Breast epithelium (tissue), 4 donors: ENCODE measurements at regions of chr7 and their contacts with region 1.

Region 1: DNA sequence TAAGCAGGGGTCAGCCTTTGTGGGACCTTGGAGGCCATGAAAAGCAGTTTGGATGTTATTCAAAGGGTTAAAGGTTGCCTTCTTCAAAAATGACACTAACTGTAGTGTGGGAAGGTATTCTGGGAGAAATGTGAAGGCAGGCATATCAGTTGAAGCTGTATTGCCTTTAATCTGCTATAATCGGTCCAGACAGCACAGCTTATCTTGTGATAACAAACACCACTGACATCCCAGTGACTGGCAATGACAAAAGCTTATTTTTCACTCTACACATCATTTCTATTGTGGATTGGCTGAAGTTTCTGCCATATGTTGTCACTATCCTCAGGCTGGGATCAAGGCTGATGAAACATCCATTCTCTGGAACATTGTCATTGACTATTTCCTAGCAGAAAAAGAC is 1149.2 kb downstream of the GRM8 start:
- DNase-seq: no peak
- H3K4me3 ChIP-seq: no peak overlapping the region
- H3K27ac ChIP-seq: no peak overlapping the region
- H3K4me1 ChIP-seq: no peaks in the 10 kb centered on the region
- H3K27me3 ChIP-seq: no peaks in the 10 kb centered on the region
- CTCF ChIP-seq: no peak
- POLR2A ChIP-seq: no peak

Region 2: DNA sequence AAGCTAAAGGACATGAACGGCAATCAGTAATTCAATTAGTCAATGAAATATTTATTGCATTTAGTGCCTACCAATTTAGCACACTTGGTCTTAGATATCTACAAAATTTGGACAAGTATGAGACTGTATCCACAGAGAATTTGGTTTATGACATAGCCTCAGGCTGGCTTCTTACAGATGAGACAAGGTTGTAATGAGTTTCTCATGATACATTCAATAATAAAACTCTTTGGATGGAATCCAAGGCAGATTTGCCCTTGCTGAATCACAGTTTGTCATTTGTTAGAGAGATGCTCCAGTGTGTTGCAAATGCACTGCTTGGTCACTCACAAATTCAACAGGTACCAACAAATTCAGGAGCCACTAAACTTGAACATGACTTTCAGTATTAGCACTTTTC is 1500.5 kb before region 1 on chr7:
- intact Hi-C with region 1: loop called (anchors 10 kb)
- DNase-seq: no peak
- H3K4me3 ChIP-seq: no peak overlapping the region
- H3K27ac ChIP-seq: no peak overlapping the region
- H3K4me1 ChIP-seq: no peaks in the 10 kb centered on the region
- H3K27me3 ChIP-seq: no peaks in the 10 kb centered on the region
- CTCF ChIP-seq: no peak
- POLR2A ChIP-seq: no peak

Region 3: GRCh38 chr7:125573126-125573525 is 530.5 kb before region 1 on chr7:
- intact Hi-C with region 1: no loop called
- DNase-seq: no peak
- H3K4me3 ChIP-seq: no peak overlapping the region
- H3K27ac ChIP-seq: no peak overlapping the region
- H3K4me1 ChIP-seq: no peaks in the 10 kb centered on the region
- H3K27me3 ChIP-seq: no peaks in the 10 kb centered on the region
- CTCF ChIP-seq: no peak
- POLR2A ChIP-seq: no peak

Region 4: DNA sequence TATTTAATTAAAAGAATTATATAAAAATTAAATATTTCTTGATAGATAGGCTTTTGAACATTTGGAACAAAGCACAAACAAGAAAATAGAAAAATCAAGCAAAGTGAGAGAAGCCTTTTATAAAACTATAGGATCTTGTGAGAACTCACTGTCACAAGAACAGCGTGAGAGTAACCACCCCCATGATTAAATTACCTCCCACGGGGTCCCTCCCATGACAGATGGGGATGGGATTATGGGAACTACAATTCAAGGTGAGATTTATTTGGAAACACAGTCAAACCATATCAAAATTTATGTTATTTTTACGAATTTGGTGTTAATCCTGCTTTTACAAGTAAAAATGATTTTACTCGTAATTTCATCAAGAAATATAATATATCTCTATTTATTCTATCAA is 37.8 kb before region 1 on chr7:
- intact Hi-C with region 1: no loop called
- DNase-seq: no peak
- H3K4me3 ChIP-seq: no peak overlapping the region
- H3K27ac ChIP-seq: no peak overlapping the region
- H3K4me1 ChIP-seq: no peaks in the 10 kb centered on the region
- H3K27me3 ChIP-seq: no peaks in the 10 kb centered on the region
- CTCF ChIP-seq: no peak
- POLR2A ChIP-seq: no peak